Dendritic cell treated with granulocyte-macrophage colony-stimulating factor and Interleukin-4, amounts not matched to agents 40 ng/mL and 50 ng/mL, for 4 days (primary cell): ENCODE measurements at regions of chr3 and their contacts with region 1.

Region 1: DNA sequence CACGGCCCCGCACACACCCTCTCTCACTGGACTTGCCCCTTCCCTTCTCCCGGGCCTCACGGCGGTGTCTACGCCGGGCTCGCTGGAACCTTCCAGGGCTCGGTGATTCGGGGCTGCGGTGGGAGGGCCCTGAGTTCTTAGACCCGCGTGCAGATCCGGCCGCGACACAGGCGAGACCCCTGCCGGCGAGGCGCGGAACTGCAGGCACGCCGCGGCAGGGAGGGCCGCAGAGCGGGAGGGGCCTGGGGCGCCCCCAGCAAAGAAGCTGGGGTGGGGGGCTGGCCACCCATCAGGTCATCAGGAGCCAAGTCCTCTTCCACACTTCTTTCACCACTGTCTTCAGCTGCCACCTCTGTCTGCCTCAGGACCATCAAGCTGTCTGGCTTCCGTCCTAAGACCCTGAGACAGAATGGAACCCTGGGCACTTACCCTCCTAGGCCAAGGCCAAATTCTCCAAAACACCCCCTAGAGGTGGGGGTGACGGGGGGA is 164.5 kb downstream of the XXYLT1 start:
- H3K4me3 Mint-ChIP-seq: peak overlapping the region; percentile 38
- H3K27ac Mint-ChIP-seq: peak overlapping the region; percentile 28
- H3K4me1 Mint-ChIP-seq: peaks cover 48% of the 10 kb centered on the region
- H3K27me3 Mint-ChIP-seq: peaks cover 4% of the 10 kb centered on the region

Region 2: GRCh38 chr3:195001961-195002861 is 104.3 kb before region 1 on chr3:
- intact Hi-C with region 1: loop called (anchors 5 kb)
- H3K4me3 Mint-ChIP-seq: no peak overlapping the region
- H3K27ac Mint-ChIP-seq: no peak overlapping the region
- H3K4me1 Mint-ChIP-seq: peaks cover 60% of the 10 kb centered on the region
- H3K27me3 Mint-ChIP-seq: peaks cover 4% of the 10 kb centered on the region

Region 3: DNA sequence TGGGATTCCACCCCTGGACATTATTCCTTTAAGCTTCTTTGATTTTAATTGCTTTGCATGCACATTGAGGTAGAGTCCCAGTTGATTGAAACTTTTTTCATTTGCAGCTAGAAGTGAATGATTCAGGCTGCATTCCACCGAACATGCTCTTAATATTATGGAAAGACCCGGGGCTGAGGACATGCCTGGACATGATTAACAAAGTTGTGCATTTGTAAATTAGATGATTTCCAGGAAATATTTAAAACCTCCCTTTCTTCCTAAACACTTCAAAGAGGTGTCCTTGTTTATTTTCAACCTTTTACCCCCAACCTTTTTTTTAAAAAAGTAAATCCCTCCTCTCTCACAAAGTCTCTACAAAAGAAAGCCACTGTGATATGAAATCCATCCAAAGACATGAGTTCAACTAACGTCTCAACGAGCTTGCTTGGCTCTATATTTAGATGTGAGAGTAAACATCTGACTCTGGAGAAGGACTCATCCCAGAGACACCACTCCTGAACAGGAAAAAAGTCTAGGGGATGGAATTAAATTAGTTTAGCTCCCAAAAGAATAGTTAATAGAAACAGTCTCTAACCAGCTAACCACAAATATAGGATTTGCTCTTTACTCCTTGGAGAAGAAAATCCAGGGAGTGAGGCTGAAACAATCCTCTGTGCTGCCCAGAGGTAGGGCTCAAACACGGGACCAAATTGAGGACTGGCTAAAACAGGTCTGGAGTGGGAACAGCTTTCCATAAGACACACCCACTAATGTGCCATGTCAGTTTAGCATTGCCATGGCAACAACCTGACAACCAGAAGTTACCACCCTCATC is 81.4 kb after region 1 on chr3:
- intact Hi-C with region 1: no loop called
- H3K4me3 Mint-ChIP-seq: no peak overlapping the region
- H3K27ac Mint-ChIP-seq: no peak overlapping the region
- H3K4me1 Mint-ChIP-seq: peaks cover 29% of the 10 kb centered on the region
- H3K27me3 Mint-ChIP-seq: no peaks in the 10 kb centered on the region